Activated naive CD8-positive, alpha-beta T cell treated with anti-CD3 and anti-CD28 coated beads, Interleukin-2, amount 10 ng/mL, durations not matched to agents 7 days and 5 days (primary cell): ENCODE measurements at regions of chr1 and their contacts with region 1.

Region 1: GRCh38 chr1:148388260-148389027 is 94.7 kb downstream of the PPIAL4G start:
- DNase-seq: peak; percentile 82
- ATAC-seq: peak; percentile 91
- H3K4me3 Mint-ChIP-seq: peak overlapping the region; percentile 95
- H3K27ac Mint-ChIP-seq: peak overlapping the region; percentile 99
- H3K4me1 Mint-ChIP-seq: peaks cover 32% of the 10 kb centered on the region
- H3K27me3 Mint-ChIP-seq: no peaks in the 10 kb centered on the region

Region 2: GRCh38 chr1:148263128-148263905 is 125.1 kb before region 1 on chr1:
- POLR2A ChIA-PET with region 1: no interaction called
- DNase-seq: peak; percentile 67
- ATAC-seq: peak; percentile 88
- H3K4me3 Mint-ChIP-seq: peak overlapping the region; percentile 86
- H3K27ac Mint-ChIP-seq: peak overlapping the region; percentile 84
- H3K4me1 Mint-ChIP-seq: peaks cover 12% of the 10 kb centered on the region
- H3K27me3 Mint-ChIP-seq: peaks cover 29% of the 10 kb centered on the region

Region 3: GRCh38 chr1:148362216-148362611 is 26.2 kb before region 1 on chr1:
- POLR2A ChIA-PET with region 1: no interaction called
- DNase-seq: no peak
- ATAC-seq: peak; percentile 7
- H3K4me3 Mint-ChIP-seq: peak overlapping the region; percentile 88
- H3K27ac Mint-ChIP-seq: no peak overlapping the region
- H3K4me1 Mint-ChIP-seq: peaks cover 47% of the 10 kb centered on the region
- H3K27me3 Mint-ChIP-seq: peaks cover 31% of the 10 kb centered on the region

Region 4: DNA sequence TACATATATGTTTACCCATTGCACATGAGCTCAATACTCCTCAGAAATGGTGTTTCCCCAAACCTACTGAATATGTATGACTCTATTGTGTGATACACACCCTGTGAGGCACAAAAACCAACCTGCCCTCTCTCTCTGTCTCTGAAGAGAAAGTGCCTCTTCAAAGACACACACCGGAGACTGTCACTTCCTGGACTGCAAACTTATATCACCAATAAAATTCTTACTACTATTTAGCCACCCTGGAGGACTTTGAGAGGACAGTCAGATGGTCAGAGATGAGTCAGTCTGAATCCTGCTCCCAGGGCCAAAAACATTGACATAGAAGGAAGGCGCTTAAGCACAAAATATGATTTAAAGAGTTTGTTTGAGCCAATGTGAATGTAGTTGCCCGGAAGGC is 15.7 kb before region 1 on chr1:
- POLR2A ChIA-PET with region 1: interaction called, 56 read pairs
- DNase-seq: no peak
- ATAC-seq: peak; percentile 77
- H3K4me3 Mint-ChIP-seq: peak overlapping the region; percentile 81
- H3K27ac Mint-ChIP-seq: peak overlapping the region; percentile 98
- H3K4me1 Mint-ChIP-seq: peaks cover 45% of the 10 kb centered on the region
- H3K27me3 Mint-ChIP-seq: no peaks in the 10 kb centered on the region